Ascending aorta (tissue), 2 donors: ENCODE measurements at regions of chr7 and their contacts with region 1.

Region 1: DNA sequence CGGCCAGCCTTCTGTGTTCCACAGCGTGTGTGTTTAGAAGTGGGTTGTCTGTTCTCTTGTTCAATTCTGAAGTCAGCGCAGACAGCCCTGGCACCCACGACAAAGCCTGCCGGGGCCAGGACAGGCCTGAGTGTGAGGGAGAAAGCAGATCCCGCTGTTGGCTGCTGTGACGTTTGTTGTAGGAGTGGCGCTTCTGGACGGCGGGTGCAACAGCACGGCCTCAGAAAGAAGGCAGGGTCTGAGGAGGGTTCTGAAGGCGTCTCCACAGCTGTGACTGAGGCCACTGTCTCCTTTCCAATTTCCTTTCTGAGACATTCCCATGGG is 76.2 kb downstream of the VIPR2 start:
- DNase-seq: peak in 1 of 2 donors; percentile 81
- H3K4me3 ChIP-seq: peak overlapping the region in 1 of 2 donors; percentile 27
- H3K27ac ChIP-seq: peak overlapping the region; percentile 84 to 88
- H3K4me1 ChIP-seq: peaks cover 16 to 27% of the 10 kb centered on the region in 2 donors
- H3K27me3 ChIP-seq: no peaks in the 10 kb centered on the region
- CTCF ChIP-seq: no peak

Region 2: DNA sequence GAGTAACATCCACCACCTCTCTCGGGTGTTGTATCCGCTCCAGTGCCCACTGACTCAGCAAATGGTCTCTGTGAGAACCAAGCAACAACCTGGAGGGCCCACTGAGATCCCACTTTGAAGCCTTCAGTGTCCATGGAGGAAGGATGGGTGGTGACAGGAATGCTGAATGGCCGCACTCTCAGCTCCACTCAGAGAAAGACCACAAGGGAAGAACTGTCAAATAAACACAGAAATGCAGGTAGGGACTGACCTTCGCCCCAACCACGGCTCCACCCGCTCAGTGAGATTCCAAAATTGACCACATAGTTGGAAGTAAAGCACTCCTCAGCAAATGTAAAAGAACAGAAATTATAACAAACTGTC is 10.4 kb after region 1 on chr7:
- intact Hi-C with region 1: no loop called
- DNase-seq: peak in 1 of 2 donors; percentile 40
- H3K4me3 ChIP-seq: no peak overlapping the region
- H3K27ac ChIP-seq: no peak overlapping the region
- H3K4me1 ChIP-seq: no peaks in the 10 kb centered on the region
- H3K27me3 ChIP-seq: no peaks in the 10 kb centered on the region
- CTCF ChIP-seq: no peak

Region 3: DNA sequence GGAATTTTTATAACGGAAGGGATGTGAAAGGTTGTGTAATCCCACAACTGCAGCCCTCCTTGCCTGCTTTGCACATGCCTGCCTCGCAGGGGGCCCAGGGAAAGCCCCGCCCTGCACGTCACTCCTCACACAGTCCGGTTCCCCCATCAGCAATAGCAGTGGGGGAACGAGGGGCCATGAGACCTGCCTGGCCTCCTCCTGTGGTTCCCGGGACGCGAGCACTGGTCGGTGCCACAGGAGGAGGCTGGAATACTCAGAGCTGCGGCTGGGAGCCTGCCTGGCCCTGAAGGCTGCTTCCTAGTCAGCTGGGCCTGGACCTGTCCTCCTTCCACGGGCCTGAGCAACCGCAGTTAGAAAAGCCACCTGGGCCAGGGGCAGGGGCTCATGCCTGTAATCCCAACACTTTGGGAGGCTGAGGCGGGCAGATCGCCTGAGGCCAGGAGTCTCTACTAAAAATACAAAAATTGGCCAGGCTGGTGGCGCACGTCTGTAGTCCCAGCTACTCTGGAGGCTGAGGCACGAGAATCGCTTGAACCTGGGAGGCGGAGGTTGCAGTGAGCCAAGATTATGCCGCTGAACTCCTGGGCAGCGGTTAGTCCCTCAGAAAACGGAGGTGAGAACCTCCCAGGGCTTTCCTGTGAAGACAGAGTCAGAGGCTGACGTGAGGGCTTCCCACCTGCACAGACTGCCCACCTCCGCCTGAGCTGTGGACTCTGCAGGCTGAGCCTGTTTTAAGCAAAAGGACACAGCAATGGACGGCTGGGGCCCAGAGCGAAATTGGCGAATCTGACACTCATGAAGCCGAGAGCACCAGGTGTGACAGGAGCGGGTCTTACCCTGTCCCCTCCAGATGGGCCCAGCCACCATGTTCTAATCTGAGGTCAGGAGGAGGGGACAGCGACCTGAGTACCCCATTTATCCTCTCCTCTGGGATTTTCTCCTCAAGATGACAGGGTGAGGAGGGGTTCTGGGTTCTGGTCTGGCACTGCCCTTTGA is 23.3 kb after region 1 on chr7:
- intact Hi-C with region 1: loop called (anchors 1 kb)
- DNase-seq: peak in 1 of 2 donors; percentile 66
- H3K4me3 ChIP-seq: no peak overlapping the region
- H3K27ac ChIP-seq: peak overlapping the region; percentile 98 to 99
- H3K4me1 ChIP-seq: peaks cover 28 to 48% of the 10 kb centered on the region in 2 donors
- H3K27me3 ChIP-seq: no peaks in the 10 kb centered on the region
- CTCF ChIP-seq: no peak